Naive thymus-derived CD4-positive, alpha-beta T cell (primary cell): ENCODE measurements at regions of chr4 and their contacts with region 1.

Region 1: DNA sequence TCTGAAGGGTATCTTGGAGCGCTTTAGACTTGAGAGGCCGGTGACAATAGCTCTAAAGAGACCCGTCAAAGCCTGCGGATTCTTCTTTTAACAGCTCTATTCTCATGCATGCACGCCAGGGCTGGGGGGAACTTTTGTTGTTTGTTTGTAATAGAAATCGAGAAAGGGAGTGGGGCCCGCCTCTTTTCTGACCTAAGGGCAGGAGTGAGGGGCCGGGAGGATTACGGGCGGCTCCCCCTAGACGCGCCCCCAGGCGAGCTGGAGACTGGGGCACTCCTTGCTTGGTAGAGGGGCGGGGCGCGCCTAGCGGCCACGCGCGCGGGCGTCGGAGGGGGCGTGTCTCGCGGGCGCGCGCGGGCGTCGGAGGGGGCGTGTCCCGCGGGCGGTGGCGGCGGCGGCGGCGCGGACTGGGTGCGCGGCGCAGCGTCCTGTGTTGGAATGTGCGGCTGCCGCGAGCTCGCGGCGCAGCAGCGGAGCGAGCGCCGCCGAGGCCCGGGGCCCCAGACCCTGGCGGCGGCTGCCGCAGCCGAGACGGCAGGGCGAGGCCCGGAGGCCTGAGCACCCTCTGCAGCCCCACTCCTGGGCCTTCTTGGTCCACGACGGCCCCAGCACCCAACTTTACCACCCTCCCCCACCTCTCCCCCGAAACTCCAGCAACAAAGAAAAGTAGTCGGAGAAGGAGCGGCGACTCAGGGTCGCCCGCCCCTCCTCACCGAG is at the start of gene REST:
- DNase-seq: peak; percentile 80 to 95 (median 88)
- ATAC-seq: peak; percentile 89
- H3K4me3 ChIP-seq: peak within 1 kb of the TSS; percentile 92
- H3K4me3 Mint-ChIP-seq: peak within 1 kb of the TSS; percentile 90 to 98 (median 96)
- H3K27ac ChIP-seq: peak within 1 kb of the TSS; percentile 80
- H3K27ac Mint-ChIP-seq: peak within 1 kb of the TSS; percentile 85 to 99 (median 93)
- H3K4me1 ChIP-seq: peaks cover 26 to 33% of the 10 kb centered on the region in 2 donors
- H3K4me1 Mint-ChIP-seq: peaks cover 35 to 53% (median 44%) of the 10 kb centered on the region in 7 donors
- H3K27me3 ChIP-seq: no peaks in the 10 kb centered on the region
- H3K27me3 Mint-ChIP-seq: peaks cover 0 to 13% (median 0%) of the 10 kb centered on the region in 5 donors
- total RNA-seq, gene REST: 55.7 to 86.4 (median 72.8) TPM

Region 2: GRCh38 chr4:54941994-54942552 is 1965.6 kb before region 1 on chr4:
- CTCF ChIA-PET with region 1: no interaction called
- POLR2A ChIA-PET with region 1: no interaction called
- intact Hi-C with region 1: loop called in 1 of 2 experiments (anchors 10 kb)
- DNase-seq: peak in 8 of 9 donors; percentile 22 to 82 (median 71)
- ATAC-seq: peak; percentile 79
- H3K4me3 ChIP-seq: peak overlapping the region; percentile 36
- H3K4me3 Mint-ChIP-seq: peak overlapping the region; percentile 71 to 85 (median 79)
- H3K27ac ChIP-seq: peak overlapping the region; percentile 87
- H3K27ac Mint-ChIP-seq: peak overlapping the region; percentile 79 to 99 (median 97)
- H3K4me1 ChIP-seq: peaks cover 0 to 37% of the 10 kb centered on the region in 2 donors
- H3K4me1 Mint-ChIP-seq: peaks cover 27 to 77% (median 58%) of the 10 kb centered on the region in 7 donors
- H3K27me3 ChIP-seq: no peaks in the 10 kb centered on the region
- H3K27me3 Mint-ChIP-seq: peaks cover 0 to 5% (median 0%) of the 10 kb centered on the region in 5 donors

Region 3: GRCh38 chr4:55546756-55547465 is 1360.7 kb before region 1 on chr4 and contains the start of gene CLOCK:
- CTCF ChIA-PET with region 1: no interaction called
- POLR2A ChIA-PET with region 1: no interaction called
- intact Hi-C with region 1: loop called (anchors 2 to 10 kb)
- DNase-seq: peak; percentile 79 to 87 (median 83)
- ATAC-seq: peak; percentile 82
- H3K4me3 ChIP-seq: peak within 1 kb of the TSS; percentile 82
- H3K4me3 Mint-ChIP-seq: peak within 1 kb of the TSS; percentile 88 to 96 (median 94)
- H3K27ac ChIP-seq: peak within 1 kb of the TSS; percentile 84
- H3K27ac Mint-ChIP-seq: peak within 1 kb of the TSS; percentile 87 to 92 (median 90)
- H3K4me1 ChIP-seq: peaks cover 5 to 8% of the 10 kb centered on the region in 2 donors
- H3K4me1 Mint-ChIP-seq: peaks cover 21 to 57% (median 40%) of the 10 kb centered on the region in 7 donors
- H3K27me3 ChIP-seq: no peaks in the 10 kb centered on the region
- H3K27me3 Mint-ChIP-seq: peaks cover 0 to 29% (median 0%) of the 10 kb centered on the region in 5 donors
- total RNA-seq, gene CLOCK: 7.9 to 12.6 (median 8.9) TPM

Region 4: DNA sequence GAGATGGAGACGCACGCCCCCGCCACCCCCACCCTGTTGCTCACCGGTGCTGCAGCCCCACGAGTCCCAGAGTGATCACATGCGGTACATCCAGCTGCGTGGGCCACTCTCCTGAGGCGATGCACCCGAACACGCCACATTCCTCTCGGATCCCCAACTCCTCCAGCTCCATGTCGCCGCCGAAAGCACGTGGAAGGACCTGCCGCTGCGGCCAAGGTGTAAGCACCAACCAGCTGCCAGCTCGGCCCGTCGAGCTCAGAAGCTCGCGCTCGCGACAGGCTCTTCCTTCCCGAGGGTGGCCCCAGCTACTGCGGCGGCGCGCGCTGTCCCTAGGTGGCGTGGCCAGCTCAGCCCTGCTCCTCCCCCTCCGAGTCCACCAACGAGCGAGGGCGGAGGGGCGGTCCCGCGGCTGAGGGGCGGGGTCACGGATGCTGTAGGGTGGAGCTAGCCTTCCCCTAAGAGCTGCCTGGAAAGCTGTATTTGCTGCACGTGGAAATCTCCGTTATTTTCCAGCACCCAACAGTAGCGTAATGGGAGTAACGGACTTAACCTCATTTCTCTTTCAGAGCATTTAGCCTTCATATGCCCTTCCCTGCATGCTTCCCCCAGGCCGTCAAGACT is 472.2 kb before region 1 on chr4 and contains the start of gene PPAT:
- CTCF ChIA-PET with region 1: interaction called, 4 read pairs
- POLR2A ChIA-PET with region 1: interaction called, 34 read pairs
- intact Hi-C with region 1: loop called (anchors 1 kb)
- DNase-seq: peak; percentile 97 to 100 (median 99)
- ATAC-seq: peak; percentile 91
- H3K4me3 ChIP-seq: peak within 1 kb of the TSS; percentile 93
- H3K4me3 Mint-ChIP-seq: peak within 1 kb of the TSS; percentile 81 to 99 (median 94)
- H3K27ac ChIP-seq: peak within 1 kb of the TSS; percentile 59
- H3K27ac Mint-ChIP-seq: peak within 1 kb of the TSS; percentile 78 to 98 (median 91)
- H3K4me1 ChIP-seq: peaks cover 12 to 15% of the 10 kb centered on the region in 2 donors
- H3K4me1 Mint-ChIP-seq: peaks cover 33 to 63% (median 47%) of the 10 kb centered on the region in 7 donors
- H3K27me3 ChIP-seq: no peaks in the 10 kb centered on the region
- H3K27me3 Mint-ChIP-seq: no peaks in the 10 kb centered on the region
- total RNA-seq, gene PPAT: 7.7 to 30.7 (median 15.3) TPM

Region 5: GRCh38 chr4:56655209-56655626 is 252.4 kb before region 1 on chr4:
- CTCF ChIA-PET with region 1: no interaction called
- POLR2A ChIA-PET with region 1: no interaction called
- intact Hi-C with region 1: loop called in 1 of 2 experiments (anchors 2 kb)
- DNase-seq: peak in 4 of 9 donors; percentile 14 to 26 (median 22)
- ATAC-seq: peak; percentile 33
- H3K4me3 ChIP-seq: peak overlapping the region; percentile 66
- H3K4me3 Mint-ChIP-seq: peak overlapping the region; percentile 85 to 99 (median 90)
- H3K27ac ChIP-seq: no peak overlapping the region
- H3K27ac Mint-ChIP-seq: peak overlapping the region in 7 of 9 donors; percentile 2 to 82 (median 28)
- H3K4me1 ChIP-seq: peaks cover 16 to 36% of the 10 kb centered on the region in 2 donors
- H3K4me1 Mint-ChIP-seq: peaks cover 16 to 59% (median 34%) of the 10 kb centered on the region in 7 donors
- H3K27me3 ChIP-seq: peaks cover 0 to 3% of the 10 kb centered on the region in 2 donors
- H3K27me3 Mint-ChIP-seq: peaks cover 9 to 43% (median 33%) of the 10 kb centered on the region in 5 donors

Region 6: DNA sequence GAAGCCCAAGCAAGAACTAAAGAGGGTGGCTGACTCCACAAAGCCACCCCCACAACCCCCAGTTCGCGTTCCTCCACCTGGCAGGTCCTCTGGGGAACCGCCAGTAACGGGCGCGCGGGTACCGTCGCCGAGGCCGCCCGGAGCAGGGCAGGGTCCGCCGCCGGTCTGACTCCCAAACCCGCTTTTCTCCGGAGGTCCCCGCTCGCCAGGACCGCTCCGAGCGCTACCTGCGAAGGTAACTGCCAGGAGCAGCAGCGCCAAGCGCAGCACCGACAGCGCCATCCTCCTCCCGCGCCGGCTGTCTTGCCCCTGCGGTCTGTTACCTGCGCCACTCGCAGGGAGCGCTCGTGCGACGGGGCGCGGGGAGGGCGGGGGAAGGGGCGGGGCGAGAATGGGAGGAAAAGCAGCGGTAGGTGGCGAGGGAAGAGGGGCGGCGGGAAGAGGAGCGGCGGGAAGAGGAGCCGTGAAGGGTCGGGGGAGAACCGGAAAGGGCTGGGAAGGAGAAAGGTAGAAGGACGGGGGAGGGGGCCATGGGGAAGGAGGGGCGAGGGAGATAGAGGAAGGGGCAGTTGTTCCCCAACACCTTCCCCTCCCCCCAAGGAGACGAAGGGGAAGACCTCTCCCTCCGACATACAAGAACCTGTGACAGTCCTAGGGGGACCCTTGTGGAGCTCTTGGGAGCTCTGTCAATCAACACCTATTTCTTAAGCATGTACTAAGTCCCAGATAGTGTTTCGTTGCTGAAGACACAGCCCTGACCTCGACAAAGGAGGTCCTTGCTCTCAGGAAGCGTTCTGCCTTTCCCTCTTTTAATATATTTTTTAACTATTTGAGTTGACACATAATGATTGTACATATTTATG is 86.0 kb before region 1 on chr4 and contains the start of gene SPINK2:
- CTCF ChIA-PET with region 1: no interaction called
- POLR2A ChIA-PET with region 1: no interaction called
- intact Hi-C with region 1: loop called (anchors 2 to 5 kb)
- DNase-seq: peak; percentile 49 to 76 (median 68)
- ATAC-seq: peak; percentile 95
- H3K4me3 ChIP-seq: peak within 1 kb of the TSS; percentile 68
- H3K4me3 Mint-ChIP-seq: peak within 1 kb of the TSS; percentile 44 to 86 (median 80)
- H3K27ac ChIP-seq: no peak within 1 kb of the TSS
- H3K27ac Mint-ChIP-seq: peak within 1 kb of the TSS in 6 of 9 donors; percentile 57 to 79 (median 71)
- H3K4me1 ChIP-seq: peaks cover 12 to 17% of the 10 kb centered on the region in 2 donors
- H3K4me1 Mint-ChIP-seq: peaks cover 16 to 41% (median 35%) of the 10 kb centered on the region in 7 donors
- H3K27me3 ChIP-seq: no peaks in the 10 kb centered on the region
- H3K27me3 Mint-ChIP-seq: peaks cover 0 to 56% (median 0%) of the 10 kb centered on the region in 5 donors
- total RNA-seq, gene SPINK2: 0.99 to 5.8 (median 4.4) TPM

Region 7: DNA sequence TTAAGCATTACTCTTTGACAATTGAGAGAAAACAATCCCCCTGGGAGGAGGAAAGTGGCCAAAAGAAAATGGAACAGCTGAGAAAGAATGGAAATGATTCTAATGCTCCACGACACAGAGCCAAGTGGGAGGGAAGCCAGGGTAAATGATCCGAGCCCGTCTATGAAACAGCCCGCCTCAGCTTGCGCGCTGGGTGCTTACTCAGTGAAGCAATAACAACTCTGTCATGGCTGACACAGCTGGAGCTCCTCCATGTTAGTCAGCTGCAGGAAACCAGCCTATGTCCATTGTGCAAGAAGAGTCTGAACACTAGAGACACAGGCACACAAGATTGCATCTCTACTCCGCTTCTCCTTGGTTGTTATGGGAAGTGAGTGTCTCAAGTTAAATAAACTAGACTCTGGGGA is 50.5 kb after region 1 on chr4:
- CTCF ChIA-PET with region 1: no interaction called
- POLR2A ChIA-PET with region 1: no interaction called
- intact Hi-C with region 1: loop called in 1 of 2 experiments (anchors 1 kb)
- DNase-seq: no peak
- ATAC-seq: peak; percentile 88
- H3K4me3 ChIP-seq: no peak overlapping the region
- H3K4me3 Mint-ChIP-seq: no peak overlapping the region
- H3K27ac ChIP-seq: no peak overlapping the region
- H3K27ac Mint-ChIP-seq: no peak overlapping the region
- H3K4me1 ChIP-seq: no peaks in the 10 kb centered on the region
- H3K4me1 Mint-ChIP-seq: peaks cover 0 to 2% (median 0%) of the 10 kb centered on the region in 7 donors
- H3K27me3 ChIP-seq: no peaks in the 10 kb centered on the region
- H3K27me3 Mint-ChIP-seq: no peaks in the 10 kb centered on the region